ENCODE measurements at regions of chr5 and their contacts with region 1.

Region 1: GRCh38 chr5:140647042-140647341 is 438 bp downstream of the NDUFA2 start:
- DNase-seq: no peak
- H3K4me3 ChIP-seq: peak overlapping the region; percentile 62 to 81
- H3K27ac ChIP-seq: peak overlapping the region; percentile 56 to 66
- H3K4me1 ChIP-seq: peaks cover 8% of the 10 kb centered on the region
- H3K27me3 ChIP-seq: no peaks in the 10 kb centered on the region
- CTCF ChIP-seq: no peak
- POLR2A ChIP-seq: no peak

Region 2: GRCh38 chr5:140564196-140565023 is 82.6 kb before region 1 on chr5 and contains the starts of genes APBB3 and SLC35A4:
- intact Hi-C with region 1: loop called (anchors 5 kb)
- DNase-seq: peak; percentile 97
- H3K4me3 ChIP-seq: peak within 1 kb of the TSS; percentile 63 to 77
- H3K27ac ChIP-seq: peak within 1 kb of the TSS; percentile 91 to 96
- H3K4me1 ChIP-seq: peaks cover 6% of the 10 kb centered on the region
- H3K27me3 ChIP-seq: no peaks in the 10 kb centered on the region
- CTCF ChIP-seq: peak in 3 of 4 experiments; percentile 5 to 36 (median 31)
- POLR2A ChIP-seq: peak; percentile 86
- total RNA-seq, gene APBB3: 23.7 to 70.7 TPM
- total RNA-seq, gene SLC35A4: 61.8 to 107 TPM